Right ventricle myocardium superior (tissue), 1 donor: ENCODE measurements at regions of chr1 and their contacts with region 1.

Region 1: GRCh38 chr1:94329986-94330385 is 88.2 kb upstream of the ABCD3 start:
- DNase-seq: no peak
- ATAC-seq: peak; percentile 55

Region 2: DNA sequence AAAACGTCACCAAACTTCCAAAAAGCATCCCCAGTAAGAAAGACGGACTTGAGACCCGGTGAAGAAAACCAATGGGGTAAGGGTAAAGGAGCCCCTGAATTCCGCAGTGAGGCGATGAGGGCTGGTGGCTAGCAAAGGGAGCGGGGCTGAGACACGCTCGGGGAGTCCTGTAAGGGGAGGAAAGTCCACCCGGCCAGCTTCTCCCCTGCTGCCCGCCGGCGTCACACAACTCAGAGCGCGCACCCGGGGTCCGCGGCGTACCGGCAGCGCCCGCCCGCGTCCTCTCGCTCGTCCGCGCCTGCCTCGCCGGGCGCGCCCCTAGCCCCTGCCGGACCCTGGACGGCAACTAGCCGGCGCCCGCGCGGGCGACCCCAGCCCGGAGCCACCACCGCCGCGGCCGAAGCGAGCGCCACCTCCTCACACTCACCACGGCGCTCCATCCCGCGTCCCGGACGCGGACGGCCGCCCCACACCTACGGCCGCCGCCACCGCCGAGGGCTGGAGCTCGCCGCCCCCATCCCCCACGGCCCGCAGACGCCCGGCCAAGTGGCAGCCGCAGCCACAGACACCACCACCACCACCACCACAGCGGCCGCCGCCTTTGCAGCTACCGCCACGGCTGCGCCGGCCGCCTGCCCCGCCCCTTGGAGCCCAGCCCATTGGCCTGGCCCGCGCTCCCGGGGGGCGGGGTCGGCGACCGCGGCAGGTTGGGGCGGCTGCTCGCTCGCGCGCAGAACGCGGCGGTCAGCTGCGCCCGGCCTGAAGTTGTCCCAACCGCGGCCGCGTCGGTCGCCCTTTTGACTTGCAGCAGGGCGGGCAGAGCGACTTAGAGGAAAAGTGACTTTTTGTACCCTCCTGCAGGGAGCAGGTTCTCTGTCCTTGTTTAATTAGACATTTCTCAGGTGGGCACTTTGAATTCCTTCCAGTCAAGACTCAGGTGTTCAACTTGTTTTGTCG is 82.6 kb before region 1 on chr1:
- intact Hi-C with region 1: loop called (anchors 5 kb)
- DNase-seq: peak; percentile 88
- ATAC-seq: peak; percentile 98

Region 3: DNA sequence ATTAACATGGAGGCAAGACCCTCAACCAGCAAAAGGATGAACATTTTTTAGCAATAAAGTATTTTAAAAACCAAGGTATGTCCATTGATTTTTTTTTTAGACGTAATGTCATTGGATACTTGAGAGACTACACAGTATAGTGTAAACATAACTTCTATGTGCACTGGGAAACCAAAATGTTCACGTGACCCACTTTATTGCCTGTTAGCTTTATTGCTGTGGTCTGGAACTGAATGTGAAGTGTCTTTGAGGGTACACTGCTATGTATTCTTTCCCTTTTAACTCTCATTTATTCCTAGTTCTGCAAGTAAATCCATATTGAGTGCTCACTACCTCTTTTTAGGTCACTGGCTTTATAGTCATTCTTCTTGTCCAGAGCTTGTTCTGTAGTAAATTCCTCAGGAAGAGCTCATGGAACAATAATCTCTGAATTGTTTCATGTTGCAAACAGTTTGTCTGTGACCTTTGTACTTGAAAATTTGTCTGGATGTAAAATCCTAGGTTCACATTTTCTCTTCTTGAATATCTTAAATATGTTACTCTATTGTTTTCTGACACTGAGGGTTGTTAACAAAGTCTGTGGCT is 108.8 kb after region 1 on chr1:
- intact Hi-C with region 1: no loop called
- DNase-seq: no peak
- ATAC-seq: no peak